ENCODE measurements at regions of chr19 and their contacts with region 1.

Region 1: GRCh38 chr19:41363753-41364523 is at the start of gene B9D2:
- DNase-seq: peak; percentile 98
- H3K4me3 Mint-ChIP-seq: peak within 1 kb of the TSS; percentile 84
- H3K27ac Mint-ChIP-seq: peak within 1 kb of the TSS; percentile 91
- H3K4me1 Mint-ChIP-seq: peaks cover 28% of the 10 kb centered on the region
- H3K27me3 Mint-ChIP-seq: no peaks in the 10 kb centered on the region
- total RNA-seq, gene B9D2: 6.2 TPM in 2 replicates

Region 2: GRCh38 chr19:41353466-41354342 is 10.2 kb before region 1 on chr19 and contains the start of gene TGFB1:
- intact Hi-C with region 1: loop called (anchors 1 kb)
- DNase-seq: peak; percentile 90
- H3K4me3 Mint-ChIP-seq: peak within 1 kb of the TSS; percentile 100
- H3K27ac Mint-ChIP-seq: peak within 1 kb of the TSS; percentile 91
- H3K4me1 Mint-ChIP-seq: peaks cover 52% of the 10 kb centered on the region
- H3K27me3 Mint-ChIP-seq: no peaks in the 10 kb centered on the region
- total RNA-seq, gene TGFB1: 125 and 126 TPM in 2 replicates

Region 3: DNA sequence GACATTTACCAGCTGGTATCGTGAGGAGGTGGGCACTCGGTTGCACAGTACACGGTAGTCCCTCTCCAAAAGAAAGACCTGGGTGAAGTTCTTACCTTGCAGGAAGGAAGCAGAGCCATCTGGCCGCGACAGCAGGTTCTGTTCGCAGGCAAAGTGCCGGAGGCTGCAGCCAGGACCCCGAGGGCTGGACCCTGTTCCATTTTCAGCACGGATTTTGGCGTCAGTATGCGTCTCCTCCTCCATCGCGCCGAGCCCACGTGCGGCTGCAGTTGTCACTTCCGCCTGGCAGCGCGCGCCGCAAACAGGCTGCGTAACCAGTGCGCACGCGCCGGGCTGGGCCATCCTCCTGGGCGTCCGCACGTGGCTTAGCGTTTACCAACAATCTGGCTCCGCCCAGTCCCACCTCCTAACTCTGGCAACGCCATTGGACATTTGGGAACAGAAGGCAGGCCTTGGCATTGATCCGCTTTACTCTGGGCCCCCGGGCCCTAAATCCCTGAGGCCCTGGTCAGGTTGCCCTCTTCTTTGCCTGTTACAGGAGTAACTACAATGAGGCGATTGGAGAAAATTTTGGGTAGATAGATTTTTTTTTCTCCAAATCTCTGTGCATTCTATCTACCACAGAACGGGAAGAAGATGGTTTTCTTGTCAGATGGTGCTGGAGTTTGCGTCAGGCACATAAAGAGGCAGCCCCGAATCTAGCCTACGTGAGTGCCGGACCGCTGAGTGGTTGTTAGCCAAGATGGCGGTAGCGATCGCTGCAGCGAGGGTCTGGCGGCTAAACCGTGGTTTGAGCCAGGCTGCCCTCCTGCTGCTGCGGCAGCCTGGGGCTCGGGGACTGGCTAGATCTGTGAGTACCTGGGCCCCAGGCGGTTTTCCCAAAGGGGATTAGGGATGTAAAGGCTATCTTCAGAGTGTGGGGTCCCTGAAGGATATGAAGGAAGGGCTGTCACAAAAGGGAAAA is 33.4 kb after region 1 on chr19 and contains the starts of genes BCKDHA and EXOSC5:
- intact Hi-C with region 1: loop called (anchors 1 kb)
- DNase-seq: peak; percentile 99
- H3K4me3 Mint-ChIP-seq: peak within 1 kb of the TSS; percentile 95
- H3K27ac Mint-ChIP-seq: peak within 1 kb of the TSS; percentile 99
- H3K4me1 Mint-ChIP-seq: peaks cover 26% of the 10 kb centered on the region
- H3K27me3 Mint-ChIP-seq: no peaks in the 10 kb centered on the region
- total RNA-seq, gene BCKDHA: 18.9 and 20.5 TPM in 2 replicates
- total RNA-seq, gene EXOSC5: 50.4 and 54.3 TPM in 2 replicates